CD14-positive monocyte (primary cell): ENCODE measurements at regions of chr9 and their contacts with region 1.

Region 1: GRCh38 chr9:124218438-124218982 is 39.2 kb upstream of the NEK6 start:
- DNase-seq: peak; percentile 95 to 98 (median 96)
- H3K4me3 ChIP-seq: peak overlapping the region in 1 of 3 experiments; percentile 27
- H3K4me3 Mint-ChIP-seq: peak overlapping the region; percentile 27 to 46
- H3K27ac ChIP-seq: peak overlapping the region; percentile 97
- H3K27ac Mint-ChIP-seq: peak overlapping the region; percentile 97 to 100 (median 99)
- H3K4me1 ChIP-seq: peaks cover 100% of the 10 kb centered on the region in 2 donors
- H3K4me1 Mint-ChIP-seq: peaks cover 98% of the 10 kb centered on the region
- H3K27me3 ChIP-seq: no peaks in the 10 kb centered on the region
- H3K27me3 Mint-ChIP-seq: no peaks in the 10 kb centered on the region
- CTCF ChIP-seq: no peak

Region 2: GRCh38 chr9:124202447-124202971 is 16.0 kb before region 1 on chr9:
- intact Hi-C with region 1: loop called in 1 of 2 experiments (anchors 2 kb)
- DNase-seq: peak; percentile 94 to 97 (median 96)
- H3K4me3 ChIP-seq: peak overlapping the region in 1 of 3 experiments; percentile 66
- H3K4me3 Mint-ChIP-seq: peak overlapping the region; percentile 72 to 85
- H3K27ac ChIP-seq: peak overlapping the region; percentile 81 to 82
- H3K27ac Mint-ChIP-seq: peak overlapping the region; percentile 89 to 98 (median 96)
- H3K4me1 ChIP-seq: peaks cover 99 to 100% of the 10 kb centered on the region in 2 donors
- H3K4me1 Mint-ChIP-seq: peaks cover 97% of the 10 kb centered on the region
- H3K27me3 ChIP-seq: no peaks in the 10 kb centered on the region
- H3K27me3 Mint-ChIP-seq: peaks cover 0 to 4% (median 0%) of the 10 kb centered on the region in 3 donors
- CTCF ChIP-seq: no peak

Region 3: DNA sequence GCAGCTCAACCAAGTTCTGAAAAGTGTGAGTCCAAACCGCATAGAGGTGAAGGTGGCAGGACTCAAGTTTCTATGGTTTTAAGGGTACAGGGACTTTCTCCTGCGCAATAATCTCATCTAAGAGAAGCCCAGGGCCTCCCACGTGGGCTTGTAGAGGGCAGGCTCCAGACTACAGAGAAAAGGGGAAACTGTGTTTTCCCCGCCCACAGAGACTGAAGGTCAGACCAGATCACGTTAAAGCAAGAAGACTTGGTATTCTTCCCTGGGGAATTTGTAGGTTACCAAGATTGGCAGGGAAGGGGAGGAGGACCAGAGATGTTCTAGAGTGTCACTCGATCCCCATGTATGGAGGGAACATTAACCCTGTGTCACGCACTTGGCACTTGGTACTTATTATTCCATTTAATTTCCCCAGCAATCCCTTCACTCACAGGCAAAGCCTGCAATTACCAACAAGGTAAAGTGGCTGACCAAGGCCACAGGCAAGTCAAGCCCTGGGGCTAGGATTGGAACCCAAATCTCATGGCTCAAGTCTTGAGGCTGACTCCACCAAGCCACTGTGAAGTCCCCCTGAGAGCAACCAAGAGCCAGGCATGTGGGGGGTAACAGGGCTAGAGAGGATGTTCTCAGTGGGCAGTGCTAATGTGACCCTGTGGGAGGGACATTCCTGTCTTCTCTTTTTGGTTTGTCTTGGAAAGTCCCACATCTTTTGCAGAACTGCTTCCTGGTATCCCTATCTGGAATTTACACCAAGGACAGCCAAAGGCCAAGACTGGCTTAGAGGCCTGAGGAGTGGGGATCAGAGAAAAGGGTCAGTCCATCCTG is 21.0 kb after region 1 on chr9:
- intact Hi-C with region 1: loop called in 1 of 2 experiments (anchors 2 kb)
- DNase-seq: peak; percentile 72 to 89 (median 87)
- H3K4me3 ChIP-seq: no peak overlapping the region
- H3K4me3 Mint-ChIP-seq: no peak overlapping the region
- H3K27ac ChIP-seq: peak overlapping the region; percentile 25 to 61
- H3K27ac Mint-ChIP-seq: peak overlapping the region; percentile 68 to 85 (median 77)
- H3K4me1 ChIP-seq: peaks cover 44% of the 10 kb centered on the region in 2 donors
- H3K4me1 Mint-ChIP-seq: peaks cover 46% of the 10 kb centered on the region
- H3K27me3 ChIP-seq: no peaks in the 10 kb centered on the region
- H3K27me3 Mint-ChIP-seq: peaks cover 0 to 4% (median 0%) of the 10 kb centered on the region in 3 donors
- CTCF ChIP-seq: no peak

Region 4: GRCh38 chr9:124257844-124258606 is 39.5 kb after region 1 on chr9 and contains the start of gene NEK6:
- intact Hi-C with region 1: loop called (anchors 1 to 5 kb)
- DNase-seq: peak in 2 of 3 donors; percentile 32 to 52
- H3K4me3 ChIP-seq: peak within 1 kb of the TSS; percentile 81 to 98 (median 91)
- H3K4me3 Mint-ChIP-seq: peak within 1 kb of the TSS; percentile 96 to 99
- H3K27ac ChIP-seq: peak within 1 kb of the TSS; percentile 76 to 93
- H3K27ac Mint-ChIP-seq: peak within 1 kb of the TSS; percentile 92 to 97 (median 95)
- H3K4me1 ChIP-seq: peaks cover 52 to 65% of the 10 kb centered on the region in 2 donors
- H3K4me1 Mint-ChIP-seq: peaks cover 70% of the 10 kb centered on the region
- H3K27me3 ChIP-seq: no peaks in the 10 kb centered on the region
- H3K27me3 Mint-ChIP-seq: peaks cover 2 to 5% (median 3%) of the 10 kb centered on the region in 3 donors
- CTCF ChIP-seq: no peak
- polyA plus RNA-seq, gene NEK6: 26.1 to 46.0 (median 35.8) TPM